ENCODE measurements at regions of chr12 and their contacts with region 1.

Region 1: GRCh38 chr12:38601949-38602348 is 285.4 kb downstream of the ALG10B start:
- DNase-seq: peak; percentile 82
- ATAC-seq: peak; percentile 97
- H3K4me3 ChIP-seq: no peak overlapping the region
- H3K27ac ChIP-seq: peak overlapping the region; percentile 17; the same call in 1 of the 2 replicates
- H3K4me1 ChIP-seq: peaks cover 14% of the 10 kb centered on the region
- H3K27me3 ChIP-seq: no peaks in the 10 kb centered on the region
- CTCF ChIP-seq: no peak

Region 2: GRCh38 chr12:38332814-38333213 is 269.1 kb before region 1 on chr12:
- CTCF ChIA-PET with region 1: no interaction called
- POLR2A ChIA-PET with region 1: no interaction called
- intact Hi-C with region 1: loop called (anchors 10 kb)
- DNase-seq: no peak
- ATAC-seq: no peak
- H3K4me3 ChIP-seq: no peak overlapping the region
- H3K27ac ChIP-seq: no peak overlapping the region
- H3K4me1 ChIP-seq: 0 out of 2 replicates have a peak, but pooled peaks cover 3% of the 10 kb centered on the region
- H3K27me3 ChIP-seq: no peaks in the 10 kb centered on the region
- CTCF ChIP-seq: no peak

Region 3: DNA sequence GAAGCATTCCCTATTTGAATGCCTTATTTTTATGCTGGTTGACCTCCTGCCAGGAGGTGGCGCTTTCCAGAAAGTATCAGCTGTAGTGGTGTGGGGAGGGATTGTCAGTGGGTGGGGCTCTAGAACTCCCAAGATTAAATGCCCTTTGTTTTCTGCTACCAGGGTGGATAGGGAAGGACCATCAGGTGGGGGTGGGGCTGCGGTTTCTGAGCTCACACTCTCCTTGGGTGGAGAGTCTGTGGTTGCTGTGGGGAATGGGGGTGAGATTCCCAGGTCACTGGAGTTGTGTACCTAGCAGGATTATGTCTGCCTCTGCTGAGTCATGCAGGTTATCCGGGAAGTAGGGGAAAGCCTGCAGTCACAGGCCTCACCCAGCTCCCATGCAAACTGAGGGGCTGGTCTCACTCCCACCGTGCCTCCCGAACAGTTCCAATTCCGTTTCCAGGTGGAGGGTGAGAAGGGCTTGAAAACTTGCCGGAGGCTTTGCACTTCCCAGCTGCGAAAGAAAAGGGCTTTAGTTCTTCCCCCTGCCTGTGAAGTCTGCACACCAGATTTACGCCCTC is 217.1 kb before region 1 on chr12:
- CTCF ChIA-PET with region 1: no interaction called
- POLR2A ChIA-PET with region 1: no interaction called
- intact Hi-C with region 1: loop called (anchors 5 kb)
- DNase-seq: peak; percentile 98
- ATAC-seq: peak; percentile 89
- H3K4me3 ChIP-seq: peak overlapping the region; percentile 45
- H3K27ac ChIP-seq: peak overlapping the region; percentile 96
- H3K4me1 ChIP-seq: peaks cover 48% of the 10 kb centered on the region
- H3K27me3 ChIP-seq: no peaks in the 10 kb centered on the region
- CTCF ChIP-seq: peak; percentile 72

Region 4: DNA sequence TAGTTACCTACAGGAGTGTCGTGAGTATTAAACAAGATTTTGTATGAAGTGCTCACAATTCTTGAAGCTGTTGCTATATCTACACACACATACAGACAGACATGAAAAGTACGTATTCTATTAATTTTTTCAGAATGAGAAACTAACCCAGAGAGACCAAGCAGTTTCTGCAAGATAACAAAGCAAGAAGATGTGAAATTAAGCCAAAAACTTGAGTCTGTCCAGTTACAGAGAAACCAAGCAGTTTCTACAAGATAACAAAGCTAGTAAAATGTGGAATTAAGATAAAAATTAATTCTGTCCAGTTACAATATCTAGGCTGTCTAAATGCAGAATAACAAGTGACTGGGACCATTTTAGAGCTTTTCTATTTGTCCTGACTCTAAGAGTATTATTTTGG is 153.0 kb before region 1 on chr12:
- CTCF ChIA-PET with region 1: no interaction called
- POLR2A ChIA-PET with region 1: no interaction called
- intact Hi-C with region 1: loop called (anchors 10 kb)
- DNase-seq: no peak
- ATAC-seq: no peak
- H3K4me3 ChIP-seq: no peak overlapping the region
- H3K27ac ChIP-seq: no peak overlapping the region
- H3K4me1 ChIP-seq: peaks cover 21% of the 10 kb centered on the region
- H3K27me3 ChIP-seq: no peaks in the 10 kb centered on the region
- CTCF ChIP-seq: no peak

Region 5: GRCh38 chr12:38527631-38528030 is 74.3 kb before region 1 on chr12:
- CTCF ChIA-PET with region 1: no interaction called
- POLR2A ChIA-PET with region 1: no interaction called
- intact Hi-C with region 1: no loop called
- DNase-seq: peak; percentile 8
- ATAC-seq: peak; percentile 56
- H3K4me3 ChIP-seq: no peak overlapping the region
- H3K27ac ChIP-seq: no peak overlapping the region
- H3K4me1 ChIP-seq: no peaks in the 10 kb centered on the region
- H3K27me3 ChIP-seq: no peaks in the 10 kb centered on the region
- CTCF ChIP-seq: no peak

Region 6: DNA sequence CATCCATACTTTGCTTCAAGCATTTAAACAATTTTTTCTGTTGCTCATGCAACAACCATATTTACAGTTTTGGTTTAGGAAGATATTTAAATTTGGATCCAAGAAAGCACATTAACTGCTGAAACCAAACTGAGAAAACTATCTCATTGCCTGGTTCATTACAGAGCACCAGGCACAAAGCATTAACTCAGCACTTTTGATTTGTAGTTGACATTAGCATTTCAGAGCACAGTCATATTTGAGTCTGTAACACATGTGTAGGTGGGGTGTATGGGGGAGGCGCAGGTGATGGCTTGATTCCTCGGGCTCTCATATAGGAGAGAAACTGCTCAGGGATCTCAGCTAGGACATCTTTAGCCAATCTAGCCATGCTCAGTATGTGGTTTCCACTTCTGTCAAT is 51.7 kb after region 1 on chr12:
- CTCF ChIA-PET with region 1: no interaction called
- POLR2A ChIA-PET with region 1: no interaction called
- intact Hi-C with region 1: loop called (anchors 5 kb)
- DNase-seq: no peak
- ATAC-seq: no peak
- H3K4me3 ChIP-seq: no peak overlapping the region
- H3K27ac ChIP-seq: no peak overlapping the region
- H3K4me1 ChIP-seq: no peaks in the 10 kb centered on the region
- H3K27me3 ChIP-seq: no peaks in the 10 kb centered on the region
- CTCF ChIP-seq: no peak

Measured in PC-3 (cell line).